Endothelial cell of umbilical vein (primary cell): ENCODE measurements at regions of chr15 and their contacts with region 1.

Region 1: GRCh38 chr15:77118882-77119321 is 48.0 kb upstream of the TSPAN3 start:
- DNase-seq: peak; percentile 80
- H3K4me3 ChIP-seq: no peak overlapping the region
- H3K27ac ChIP-seq: peak overlapping the region; percentile 8
- H3K4me1 ChIP-seq: peaks cover 14% of the 10 kb centered on the region
- H3K27me3 ChIP-seq: no peaks in the 10 kb centered on the region
- CTCF ChIP-seq: peak; percentile 57 to 63
- POLR2A ChIP-seq: no peak

Region 2: GRCh38 chr15:77087213-77087612 is 31.7 kb before region 1 on chr15:
- CTCF ChIA-PET with region 1: no interaction called
- POLR2A ChIA-PET with region 1: no interaction called
- dilution Hi-C with region 1: no loop called
- intact Hi-C with region 1: no loop called
- DNase-seq: no peak
- H3K4me3 ChIP-seq: no peak overlapping the region
- H3K27ac ChIP-seq: no peak overlapping the region
- H3K4me1 ChIP-seq: peaks cover 7% of the 10 kb centered on the region
- H3K27me3 ChIP-seq: peaks cover 0 to 2% of the 10 kb centered on the region in 2 experiments
- CTCF ChIP-seq: no peak
- POLR2A ChIP-seq: no peak

Region 3: GRCh38 chr15:77130315-77130930 is 11.5 kb after region 1 on chr15:
- CTCF ChIA-PET with region 1: interaction called, 22 read pairs
- POLR2A ChIA-PET with region 1: no interaction called
- dilution Hi-C with region 1: no loop called
- intact Hi-C with region 1: no loop called
- DNase-seq: no peak
- H3K4me3 ChIP-seq: no peak overlapping the region
- H3K27ac ChIP-seq: no peak overlapping the region
- H3K4me1 ChIP-seq: no peaks in the 10 kb centered on the region
- H3K27me3 ChIP-seq: no peaks in the 10 kb centered on the region
- CTCF ChIP-seq: no peak
- POLR2A ChIP-seq: no peak

Region 4: DNA sequence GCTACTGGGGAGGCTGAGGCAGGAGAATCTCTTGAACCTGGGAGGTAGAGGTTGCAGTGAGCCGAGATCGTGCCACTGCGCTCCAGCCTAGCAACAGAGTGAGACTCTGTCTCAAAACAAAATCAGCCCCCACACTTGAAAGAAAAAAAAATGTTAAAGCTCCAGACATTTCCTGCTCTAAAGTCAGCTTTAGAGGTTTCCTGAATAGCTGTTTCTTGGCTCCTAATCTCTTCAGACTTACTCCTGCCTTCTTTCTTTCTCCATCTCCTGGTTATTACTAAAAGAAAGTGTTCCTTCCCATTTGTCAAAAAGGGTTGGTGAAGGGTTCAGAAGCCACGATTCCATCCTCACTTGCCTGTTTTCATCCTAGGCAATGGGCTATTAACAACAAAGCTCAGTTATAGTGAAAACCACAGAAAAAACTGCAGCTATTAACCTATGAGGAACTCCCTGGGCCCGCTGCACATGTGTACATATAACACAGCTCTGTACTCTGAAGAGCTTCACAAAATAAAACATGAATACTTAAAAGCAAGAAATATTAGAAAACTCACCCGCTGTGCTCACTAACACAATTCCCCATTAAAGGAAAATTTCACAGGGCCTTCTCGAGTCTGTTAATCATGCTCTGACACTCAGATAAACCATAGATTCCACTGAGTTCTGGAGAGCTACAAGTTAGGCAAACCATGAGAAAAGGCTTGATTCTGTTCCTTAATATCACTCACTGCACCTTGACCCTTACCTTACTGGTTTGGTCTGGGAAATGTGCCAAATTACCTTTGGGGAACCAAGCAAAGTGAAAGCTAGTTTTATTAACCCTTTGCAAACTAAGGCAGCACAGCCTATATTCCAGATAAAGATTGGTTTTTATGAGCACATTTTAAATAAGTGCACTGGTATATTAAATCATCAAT is 41.9 kb after region 1 on chr15:
- CTCF ChIA-PET with region 1: interaction called, 14 read pairs
- POLR2A ChIA-PET with region 1: no interaction called
- dilution Hi-C with region 1: no loop called
- intact Hi-C with region 1: no loop called
- DNase-seq: peak; percentile 73
- H3K4me3 ChIP-seq: no peak overlapping the region
- H3K27ac ChIP-seq: peak overlapping the region; percentile 27
- H3K4me1 ChIP-seq: peaks cover 21% of the 10 kb centered on the region
- H3K27me3 ChIP-seq: no peaks in the 10 kb centered on the region
- CTCF ChIP-seq: no peak
- POLR2A ChIP-seq: no peak

Region 5: GRCh38 chr15:77224352-77224751 is 105.5 kb after region 1 on chr15:
- CTCF ChIA-PET with region 1: interaction called, 10 read pairs
- POLR2A ChIA-PET with region 1: no interaction called
- dilution Hi-C with region 1: no loop called
- intact Hi-C with region 1: no loop called
- DNase-seq: peak; percentile 72
- H3K4me3 ChIP-seq: peak overlapping the region in 1 of 3 experiments; percentile 18
- H3K27ac ChIP-seq: peak overlapping the region; percentile 44
- H3K4me1 ChIP-seq: peaks cover 35% of the 10 kb centered on the region
- H3K27me3 ChIP-seq: no peaks in the 10 kb centered on the region
- CTCF ChIP-seq: no peak
- POLR2A ChIP-seq: peak; percentile 22

Region 6: DNA sequence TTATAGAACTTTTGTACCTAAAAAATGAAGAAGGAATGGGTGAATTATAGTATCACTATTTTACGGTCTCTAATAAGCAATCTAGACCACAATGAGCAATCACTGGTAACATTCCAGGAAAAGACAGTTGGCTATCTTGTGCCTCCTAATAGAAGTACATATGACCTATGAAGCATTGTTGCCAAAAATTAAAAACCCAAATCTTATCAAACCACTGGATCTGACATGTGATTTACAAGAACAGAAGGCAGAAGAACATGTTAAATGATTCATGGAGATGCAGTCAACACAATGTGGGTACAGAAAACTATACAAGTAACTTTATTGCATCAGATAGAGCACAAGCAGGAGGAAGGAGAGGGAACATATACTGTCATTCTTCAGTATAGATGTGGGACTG is 1374.0 kb after region 1 on chr15:
- CTCF ChIA-PET with region 1: no interaction called
- POLR2A ChIA-PET with region 1: no interaction called
- dilution Hi-C with region 1: no loop called
- intact Hi-C with region 1: no loop called
- DNase-seq: no peak
- H3K4me3 ChIP-seq: no peak overlapping the region
- H3K27ac ChIP-seq: no peak overlapping the region
- H3K4me1 ChIP-seq: no peaks in the 10 kb centered on the region
- H3K27me3 ChIP-seq: no peaks in the 10 kb centered on the region
- CTCF ChIP-seq: no peak
- POLR2A ChIP-seq: no peak